ENCODE measurements at regions of chr1 and their contacts with region 1.

Region 1: DNA sequence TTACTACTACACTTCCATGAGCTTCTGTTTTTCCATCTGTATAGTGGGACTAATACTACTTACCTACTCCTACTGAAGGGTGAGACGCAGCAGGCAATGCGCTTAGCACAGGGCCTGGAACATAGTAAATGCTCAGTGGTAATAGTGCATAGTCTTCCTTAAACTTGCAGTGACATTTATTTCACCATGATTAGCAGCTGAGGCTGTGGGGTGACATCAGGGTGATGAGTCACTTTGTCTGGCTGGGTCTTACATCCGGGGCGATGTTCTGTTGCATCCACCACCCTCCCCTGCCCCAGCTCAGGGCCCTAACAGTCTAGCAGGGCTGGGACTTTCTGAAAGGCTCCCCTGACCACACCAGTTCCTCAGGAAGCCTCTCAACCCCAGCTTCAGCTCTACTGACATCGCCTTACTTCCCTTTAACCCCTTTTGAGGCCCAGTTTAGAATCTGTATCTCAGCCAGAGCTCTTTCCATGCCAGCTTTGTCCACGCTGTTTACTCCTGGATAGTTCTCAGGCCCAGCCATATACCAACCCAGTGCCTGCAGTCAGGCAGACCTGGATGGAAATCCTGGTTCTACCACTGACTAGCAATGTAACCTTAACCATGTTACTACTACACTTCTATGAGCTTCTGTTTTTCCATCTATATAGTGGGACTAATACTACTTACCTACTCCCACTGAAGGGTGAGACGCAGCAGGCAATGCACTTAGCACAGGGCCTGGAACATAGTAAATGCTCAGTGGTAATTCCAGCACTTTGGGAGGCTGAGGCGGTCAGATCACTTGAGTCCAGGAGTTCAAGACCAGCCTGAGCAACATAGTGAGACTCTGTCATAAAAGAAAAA is 66.3 kb downstream of the CD58 start:
- DNase-seq: peak; percentile 49 to 86 (median 73)
- ATAC-seq: peak; percentile 96
- H3K4me3 ChIP-seq: peak overlapping the region; percentile 1
- H3K4me3 Mint-ChIP-seq: peak overlapping the region in 8 of 10 donors; percentile 11 to 77 (median 48)
- H3K27ac ChIP-seq: peak overlapping the region; percentile 48
- H3K27ac Mint-ChIP-seq: peak overlapping the region; percentile 65 to 92 (median 77)
- H3K4me1 ChIP-seq: peaks cover 20 to 49% of the 10 kb centered on the region in 2 donors
- H3K4me1 Mint-ChIP-seq: peaks cover 21 to 89% (median 34%) of the 10 kb centered on the region in 7 donors
- H3K27me3 ChIP-seq: no peaks in the 10 kb centered on the region
- H3K27me3 Mint-ChIP-seq: no peaks in the 10 kb centered on the region

Region 2: DNA sequence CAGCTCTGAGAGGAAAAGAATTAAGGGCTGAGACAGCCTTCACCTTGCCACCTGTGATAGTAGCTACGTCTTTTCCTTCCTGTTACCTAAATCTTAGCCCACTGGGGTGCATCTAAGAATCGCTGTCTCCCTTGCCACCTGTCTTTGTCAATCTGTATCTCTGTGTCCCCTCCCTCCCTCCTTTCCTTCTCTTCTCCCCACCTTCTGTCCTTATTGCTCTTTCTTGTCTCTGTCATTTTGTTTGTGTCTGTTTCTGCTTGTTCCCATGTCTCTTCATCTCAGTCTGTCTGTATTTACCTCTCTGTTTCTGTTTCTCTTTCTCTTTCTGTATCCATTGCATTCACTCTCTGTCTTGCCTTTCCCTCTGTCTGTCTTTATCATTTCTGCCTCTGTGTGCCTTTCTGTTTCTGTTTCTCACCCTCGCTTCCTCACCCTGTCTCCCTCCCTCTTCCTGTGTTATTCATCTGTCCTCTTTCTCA is 498.0 kb before region 1 on chr1:
- CTCF ChIA-PET with region 1: no interaction called
- POLR2A ChIA-PET with region 1: no interaction called
- intact Hi-C with region 1: loop called in 1 of 2 experiments (anchors 10 kb)
- DNase-seq: peak in 6 of 9 donors; percentile 1 to 34 (median 18)
- ATAC-seq: peak; percentile 77
- H3K4me3 ChIP-seq: peak overlapping the region; percentile 52
- H3K4me3 Mint-ChIP-seq: peak overlapping the region; percentile 30 to 90 (median 82)
- H3K27ac ChIP-seq: peak overlapping the region; percentile 52
- H3K27ac Mint-ChIP-seq: peak overlapping the region; percentile 59 to 91 (median 85)
- H3K4me1 ChIP-seq: peaks cover 9 to 11% of the 10 kb centered on the region in 2 donors
- H3K4me1 Mint-ChIP-seq: peaks cover 8 to 16% (median 12%) of the 10 kb centered on the region in 7 donors
- H3K27me3 ChIP-seq: no peaks in the 10 kb centered on the region
- H3K27me3 Mint-ChIP-seq: peaks cover 3 to 11% (median 9%) of the 10 kb centered on the region in 5 donors

Region 3: DNA sequence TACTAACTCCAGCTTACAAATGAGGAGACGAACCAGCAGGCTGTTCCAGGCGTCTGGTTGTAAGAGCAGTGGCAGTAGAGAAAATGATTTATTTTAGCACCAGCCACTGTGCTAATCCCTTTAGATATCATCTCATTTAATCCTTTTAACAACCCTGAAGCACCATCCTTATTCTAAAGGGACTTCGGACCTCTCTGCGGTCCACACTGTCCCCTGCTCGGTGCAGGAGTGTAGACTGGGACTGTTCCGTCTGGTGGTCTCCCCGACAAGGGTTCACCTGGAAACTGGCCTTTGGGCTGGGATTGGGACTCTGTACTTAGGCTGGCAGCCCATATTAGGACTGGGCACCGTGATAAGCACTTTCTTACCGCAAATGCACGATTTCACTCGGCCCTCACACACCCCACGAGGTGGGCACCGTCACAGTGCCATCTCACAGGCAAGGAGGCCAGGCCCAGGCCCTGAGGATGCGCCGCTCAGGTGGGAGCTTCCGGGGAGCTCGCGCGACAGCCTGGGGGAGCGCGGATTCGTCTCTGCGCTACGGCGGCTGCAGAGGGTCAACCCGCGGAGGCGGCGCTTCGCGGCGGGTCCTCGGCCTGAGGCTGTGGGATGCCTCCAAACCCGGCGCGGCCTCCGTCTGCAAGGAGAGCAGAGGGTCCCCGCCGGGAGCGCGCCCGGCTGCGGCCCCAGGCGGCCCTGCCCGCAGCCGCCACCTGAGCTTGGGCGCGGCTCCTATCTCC is 86.3 kb before region 1 on chr1:
- CTCF ChIA-PET with region 1: no interaction called
- POLR2A ChIA-PET with region 1: no interaction called
- intact Hi-C with region 1: loop called in 1 of 2 experiments (anchors 1 kb)
- DNase-seq: peak; percentile 76 to 90 (median 88)
- ATAC-seq: peak; percentile 97
- H3K4me3 ChIP-seq: peak overlapping the region; percentile 97
- H3K4me3 Mint-ChIP-seq: peak overlapping the region; percentile 85 to 95 (median 90)
- H3K27ac ChIP-seq: peak overlapping the region; percentile 87
- H3K27ac Mint-ChIP-seq: peak overlapping the region; percentile 83 to 98 (median 95)
- H3K4me1 ChIP-seq: peaks cover 12 to 18% of the 10 kb centered on the region in 2 donors
- H3K4me1 Mint-ChIP-seq: peaks cover 22 to 52% (median 47%) of the 10 kb centered on the region in 7 donors
- H3K27me3 ChIP-seq: no peaks in the 10 kb centered on the region
- H3K27me3 Mint-ChIP-seq: peaks cover 0 to 15% (median 0%) of the 10 kb centered on the region in 5 donors

Region 4: GRCh38 chr1:116538544-116538943 is 34.0 kb after region 1 on chr1:
- CTCF ChIA-PET with region 1: interaction called, 3 read pairs
- POLR2A ChIA-PET with region 1: interaction called, 3 read pairs
- intact Hi-C with region 1: loop called in 1 of 2 experiments (anchors 1 kb)
- DNase-seq: peak in 1 of 9 donors; percentile 46
- ATAC-seq: peak; percentile 22
- H3K4me3 ChIP-seq: no peak overlapping the region
- H3K4me3 Mint-ChIP-seq: peak overlapping the region in 1 of 10 donors; percentile 3
- H3K27ac ChIP-seq: no peak overlapping the region
- H3K27ac Mint-ChIP-seq: peak overlapping the region in 1 of 9 donors; percentile 56
- H3K4me1 ChIP-seq: peaks cover 0 to 12% of the 10 kb centered on the region in 2 donors
- H3K4me1 Mint-ChIP-seq: peaks cover 3 to 55% (median 7%) of the 10 kb centered on the region in 7 donors
- H3K27me3 ChIP-seq: no peaks in the 10 kb centered on the region
- H3K27me3 Mint-ChIP-seq: no peaks in the 10 kb centered on the region

Region 5: GRCh38 chr1:116763787-116764465 is 259.4 kb after region 1 on chr1:
- CTCF ChIA-PET with region 1: no interaction called
- POLR2A ChIA-PET with region 1: no interaction called
- intact Hi-C with region 1: loop called in 1 of 2 experiments (anchors 10 kb)
- DNase-seq: peak in 2 of 9 donors; percentile 64 to 66
- ATAC-seq: peak; percentile 10
- H3K4me3 ChIP-seq: peak overlapping the region; percentile 17
- H3K4me3 Mint-ChIP-seq: peak overlapping the region; percentile 79 to 99 (median 85)
- H3K27ac ChIP-seq: peak overlapping the region; percentile 89
- H3K27ac Mint-ChIP-seq: peak overlapping the region; percentile 93 to 100 (median 97)
- H3K4me1 ChIP-seq: peaks cover 94 to 100% of the 10 kb centered on the region in 2 donors
- H3K4me1 Mint-ChIP-seq: peaks cover 74 to 100% (median 94%) of the 10 kb centered on the region in 7 donors
- H3K27me3 ChIP-seq: no peaks in the 10 kb centered on the region
- H3K27me3 Mint-ChIP-seq: no peaks in the 10 kb centered on the region

Region 6: GRCh38 chr1:117346206-117346928 is 841.8 kb after region 1 on chr1:
- CTCF ChIA-PET with region 1: no interaction called
- POLR2A ChIA-PET with region 1: no interaction called
- intact Hi-C with region 1: no loop called
- DNase-seq: no peak
- ATAC-seq: peak; percentile 22
- H3K4me3 ChIP-seq: no peak overlapping the region
- H3K4me3 Mint-ChIP-seq: no peak overlapping the region
- H3K27ac ChIP-seq: no peak overlapping the region
- H3K27ac Mint-ChIP-seq: peak overlapping the region in 1 of 9 donors; percentile 77
- H3K4me1 ChIP-seq: no peaks in the 10 kb centered on the region
- H3K4me1 Mint-ChIP-seq: peaks cover 2 to 17% (median 9%) of the 10 kb centered on the region in 7 donors
- H3K27me3 ChIP-seq: no peaks in the 10 kb centered on the region
- H3K27me3 Mint-ChIP-seq: peaks cover 0 to 12% (median 3%) of the 10 kb centered on the region in 5 donors

Measured in naive thymus-derived CD4-positive, alpha-beta T cell (primary cell).